ENCODE measurements at regions of chr6 and their contacts with region 1.

Region 1: DNA sequence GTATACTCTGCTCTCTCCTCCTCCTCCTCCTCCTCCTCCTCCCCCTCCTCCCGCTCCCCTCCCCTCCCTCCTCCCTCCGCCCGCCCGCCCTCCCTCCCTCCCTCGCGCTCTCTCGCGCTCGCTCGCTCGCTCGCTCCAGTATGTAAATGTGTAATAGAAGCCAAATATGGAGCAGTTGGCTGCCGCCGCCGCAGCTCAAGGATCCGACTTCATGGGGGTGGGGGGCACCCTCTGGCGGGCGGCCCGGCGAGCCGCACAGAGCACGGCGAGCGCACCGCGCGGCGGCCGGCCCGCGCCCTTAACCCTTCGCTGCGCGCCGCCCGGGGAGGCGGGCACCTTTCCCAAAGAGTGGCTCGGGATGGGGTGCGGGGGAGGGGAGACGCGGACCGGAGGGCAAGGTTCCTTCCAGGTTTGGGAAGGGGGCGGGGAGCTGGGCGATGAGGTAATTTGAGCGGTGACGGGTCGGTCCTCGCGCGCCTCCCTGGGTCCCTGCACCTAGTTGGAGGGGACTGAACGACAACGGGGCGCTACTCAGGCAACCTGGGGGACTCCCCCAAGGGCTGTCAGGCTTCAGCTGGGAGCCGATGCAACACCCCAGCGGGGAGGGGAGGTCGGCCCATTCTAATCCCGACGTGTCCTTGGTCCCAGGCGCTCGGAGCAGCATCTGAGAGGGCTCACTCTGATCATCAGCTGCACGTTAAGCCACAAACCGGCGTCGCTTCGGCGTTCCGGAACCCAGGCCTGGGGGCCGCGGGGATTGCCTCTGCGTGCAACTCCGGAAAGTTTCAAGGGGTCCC is 409 bp upstream of the ATXN1 start:
- DNase-seq: peak; percentile 96

Region 2: GRCh38 chr6:16332175-16332542 is 429.5 kb before region 1 on chr6:
- intact Hi-C with region 1: loop called in 1 of 2 experiments (anchors 5 kb)
- DNase-seq: peak; percentile 90

Region 3: GRCh38 chr6:16514249-16514648 is 247.4 kb before region 1 on chr6:
- intact Hi-C with region 1: loop called (anchors 10 kb)
- DNase-seq: no peak

Region 4: DNA sequence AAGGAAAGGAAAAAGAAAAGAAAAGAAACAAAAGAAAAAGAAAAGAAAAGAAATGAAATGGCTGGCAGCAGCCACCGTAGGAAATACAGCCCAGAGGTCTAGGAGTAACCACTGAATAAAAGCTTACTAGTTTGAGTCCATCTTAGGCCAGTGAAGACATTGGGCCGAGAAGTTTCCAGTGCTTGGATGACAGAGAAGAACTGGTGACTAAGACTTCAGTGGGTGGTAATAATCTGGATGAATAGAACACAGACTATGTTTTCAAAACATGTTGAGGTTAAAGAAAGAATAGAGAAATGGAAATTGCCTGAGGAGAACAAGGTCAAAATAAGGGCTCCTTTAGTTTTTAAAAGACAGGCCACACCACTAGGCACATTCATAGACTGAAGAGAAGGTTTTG is 199.2 kb before region 1 on chr6:
- intact Hi-C with region 1: loop called in 1 of 2 experiments (anchors 10 kb)
- DNase-seq: no peak

Region 5: GRCh38 chr6:16964553-16965501 is 203.2 kb after region 1 on chr6:
- intact Hi-C with region 1: loop called in 1 of 2 experiments (anchors 10 kb)
- DNase-seq: peak; percentile 85

Region 6: DNA sequence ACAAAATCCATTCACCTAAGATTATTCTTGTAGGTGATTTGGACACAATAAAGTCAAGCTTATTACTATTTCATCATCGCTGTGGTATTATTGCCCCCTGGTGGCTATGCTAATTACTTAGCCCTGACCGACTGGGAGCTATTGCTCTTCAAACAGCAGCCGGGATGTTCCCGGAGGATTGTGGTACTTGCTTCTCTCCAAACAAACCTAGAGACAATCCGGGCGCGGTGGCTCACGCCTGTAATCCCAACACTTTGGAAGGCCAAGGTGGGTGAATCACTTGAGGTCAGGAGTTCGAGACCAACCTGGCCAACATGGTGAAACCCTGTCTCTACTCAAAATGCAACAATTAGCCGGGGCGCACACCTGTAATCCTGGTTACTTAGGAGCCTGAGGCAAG is 324.8 kb after region 1 on chr6:
- intact Hi-C with region 1: loop called in 1 of 2 experiments (anchors 10 kb)
- DNase-seq: no peak

Measured in posterior vena cava (tissue), 2 donors.